ENCODE measurements at regions of chr1 and their contacts with region 1.

Region 1: GRCh38 chr1:85259118-85259911 is at the start of gene C1orf52:
- DNase-seq: peak; percentile 96
- H3K4me3 Mint-ChIP-seq: peak within 1 kb of the TSS; percentile 96
- H3K27ac Mint-ChIP-seq: peak within 1 kb of the TSS; percentile 90
- H3K4me1 Mint-ChIP-seq: peaks cover 40% of the 10 kb centered on the region
- H3K27me3 Mint-ChIP-seq: no peaks in the 10 kb centered on the region
- total RNA-seq, gene C1orf52: 30.9 and 31.6 TPM in 2 replicates

Region 2: GRCh38 chr1:83931658-83932253 is 1327.6 kb before region 1 on chr1:
- intact Hi-C with region 1: no loop called
- DNase-seq: no peak
- H3K4me3 Mint-ChIP-seq: no peak overlapping the region
- H3K27ac Mint-ChIP-seq: no peak overlapping the region
- H3K4me1 Mint-ChIP-seq: no peaks in the 10 kb centered on the region
- H3K27me3 Mint-ChIP-seq: peaks cover 8% of the 10 kb centered on the region

Region 3: GRCh38 chr1:84298328-84298683 is 961.0 kb before region 1 on chr1:
- intact Hi-C with region 1: loop called (anchors 5 kb)
- DNase-seq: peak; percentile 46
- H3K4me3 Mint-ChIP-seq: peak overlapping the region; percentile 86
- H3K27ac Mint-ChIP-seq: peak overlapping the region; percentile 68
- H3K4me1 Mint-ChIP-seq: peaks cover 39% of the 10 kb centered on the region
- H3K27me3 Mint-ChIP-seq: peaks cover 5% of the 10 kb centered on the region

Region 4: DNA sequence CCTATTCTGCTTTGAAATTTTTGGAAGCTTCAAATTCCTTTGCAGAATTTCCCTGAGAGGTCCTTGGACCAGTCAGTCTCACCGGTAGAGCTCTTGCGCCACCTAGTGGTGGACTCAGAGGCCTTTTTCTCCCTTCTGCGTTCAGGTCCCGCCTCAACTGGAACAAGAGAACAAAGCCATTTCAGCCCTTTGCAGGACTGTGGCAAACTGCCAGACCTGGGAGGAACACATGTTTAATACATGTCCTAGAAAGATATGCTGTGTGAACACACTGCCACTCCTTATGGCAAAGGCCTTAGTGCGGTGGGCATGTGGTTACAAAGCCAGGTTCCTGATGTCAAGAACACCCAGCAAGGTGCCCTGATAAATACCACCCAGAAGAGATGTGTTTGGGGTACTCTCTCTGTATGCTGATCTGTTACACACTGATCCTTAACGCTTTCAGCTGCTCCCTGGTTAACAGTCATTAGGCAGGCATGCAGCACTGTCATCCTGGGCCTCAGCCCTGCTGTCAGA is 486.8 kb before region 1 on chr1:
- intact Hi-C with region 1: loop called (anchors 10 kb)
- DNase-seq: peak; percentile 48
- H3K4me3 Mint-ChIP-seq: no peak overlapping the region
- H3K27ac Mint-ChIP-seq: no peak overlapping the region
- H3K4me1 Mint-ChIP-seq: peaks cover 6% of the 10 kb centered on the region
- H3K27me3 Mint-ChIP-seq: peaks cover 21% of the 10 kb centered on the region

Region 5: GRCh38 chr1:84996846-84997666 is 262.3 kb before region 1 on chr1 and contains the start of gene MCOLN2:
- intact Hi-C with region 1: loop called (anchors 1 kb)
- DNase-seq: peak; percentile 52
- H3K4me3 Mint-ChIP-seq: peak within 1 kb of the TSS; percentile 88
- H3K27ac Mint-ChIP-seq: peak within 1 kb of the TSS; percentile 88
- H3K4me1 Mint-ChIP-seq: peaks cover 55% of the 10 kb centered on the region
- H3K27me3 Mint-ChIP-seq: peaks cover 12% of the 10 kb centered on the region
- total RNA-seq, gene MCOLN2: 117 and 119 TPM in 2 replicates

Region 6: GRCh38 chr1:85109475-85109874 is 149.8 kb before region 1 on chr1:
- intact Hi-C with region 1: loop called (anchors 1 kb)
- DNase-seq: peak; percentile 20
- H3K4me3 Mint-ChIP-seq: no peak overlapping the region
- H3K27ac Mint-ChIP-seq: no peak overlapping the region
- H3K4me1 Mint-ChIP-seq: no peaks in the 10 kb centered on the region
- H3K27me3 Mint-ChIP-seq: peaks cover 5% of the 10 kb centered on the region

Region 7: GRCh38 chr1:85297855-85298629 is 38.7 kb after region 1 on chr1:
- intact Hi-C with region 1: loop called (anchors 1 kb)
- DNase-seq: peak; percentile 62
- H3K4me3 Mint-ChIP-seq: peak overlapping the region; percentile 1
- H3K27ac Mint-ChIP-seq: peak overlapping the region; percentile 80
- H3K4me1 Mint-ChIP-seq: peaks cover 34% of the 10 kb centered on the region
- H3K27me3 Mint-ChIP-seq: peaks cover 47% of the 10 kb centered on the region

Region 8: GRCh38 chr1:85344256-85344694 is 85.0 kb after region 1 on chr1:
- intact Hi-C with region 1: no loop called
- DNase-seq: no peak
- H3K4me3 Mint-ChIP-seq: no peak overlapping the region
- H3K27ac Mint-ChIP-seq: no peak overlapping the region
- H3K4me1 Mint-ChIP-seq: no peaks in the 10 kb centered on the region
- H3K27me3 Mint-ChIP-seq: peaks cover 28% of the 10 kb centered on the region